CD4-positive, alpha-beta T cell (primary cell): ENCODE measurements at regions of chr15 and their contacts with region 1.

Region 1: GRCh38 chr15:100627789-100628395 is 25.5 kb downstream of the ASB7 start:
- DNase-seq: peak; percentile 43 to 85 (median 54)
- ATAC-seq: peak; percentile 92
- H3K4me3 ChIP-seq: no peak overlapping the region
- H3K4me3 Mint-ChIP-seq: no peak overlapping the region
- H3K27ac ChIP-seq: no peak overlapping the region
- H3K27ac Mint-ChIP-seq: no peak overlapping the region
- H3K4me1 ChIP-seq: peaks cover 8% of the 10 kb centered on the region
- H3K4me1 Mint-ChIP-seq: peaks cover 31% of the 10 kb centered on the region
- H3K27me3 ChIP-seq: no peaks in the 10 kb centered on the region
- H3K27me3 Mint-ChIP-seq: no peaks in the 10 kb centered on the region
- CTCF ChIP-seq: peak; percentile 96

Region 2: DNA sequence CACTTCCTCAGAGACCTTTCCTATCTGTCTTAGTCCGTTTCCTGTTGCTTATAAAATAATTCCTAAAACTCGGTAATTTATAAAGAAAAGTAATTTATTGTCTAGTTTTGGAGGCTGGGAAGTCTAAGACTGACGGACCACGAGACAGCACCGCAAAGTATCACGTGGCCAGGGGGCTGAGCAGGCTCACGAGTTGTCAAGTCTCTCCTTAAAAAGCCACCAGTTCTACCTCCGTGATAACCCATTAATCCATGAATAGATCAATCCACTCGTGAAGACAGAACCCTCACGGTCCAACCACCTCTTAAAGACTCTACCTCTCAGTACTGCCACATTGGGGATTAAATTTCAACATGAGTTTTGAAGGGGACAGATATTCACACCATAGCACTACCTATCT is 26.7 kb before region 1 on chr15:
- CTCF ChIA-PET with region 1: no interaction called
- POLR2A ChIA-PET with region 1: no interaction called
- intact Hi-C with region 1: no loop called
- DNase-seq: peak in 9 of 14 experiments; percentile 26 to 73 (median 34)
- ATAC-seq: no peak
- H3K4me3 ChIP-seq: peak overlapping the region; percentile 96
- H3K4me3 Mint-ChIP-seq: no peak overlapping the region
- H3K27ac ChIP-seq: peak overlapping the region; percentile 84 to 94
- H3K27ac Mint-ChIP-seq: no peak overlapping the region
- H3K4me1 ChIP-seq: peaks cover 48% of the 10 kb centered on the region
- H3K4me1 Mint-ChIP-seq: peaks cover 67% of the 10 kb centered on the region
- H3K27me3 ChIP-seq: no peaks in the 10 kb centered on the region
- H3K27me3 Mint-ChIP-seq: no peaks in the 10 kb centered on the region
- CTCF ChIP-seq: no peak

Region 3: DNA sequence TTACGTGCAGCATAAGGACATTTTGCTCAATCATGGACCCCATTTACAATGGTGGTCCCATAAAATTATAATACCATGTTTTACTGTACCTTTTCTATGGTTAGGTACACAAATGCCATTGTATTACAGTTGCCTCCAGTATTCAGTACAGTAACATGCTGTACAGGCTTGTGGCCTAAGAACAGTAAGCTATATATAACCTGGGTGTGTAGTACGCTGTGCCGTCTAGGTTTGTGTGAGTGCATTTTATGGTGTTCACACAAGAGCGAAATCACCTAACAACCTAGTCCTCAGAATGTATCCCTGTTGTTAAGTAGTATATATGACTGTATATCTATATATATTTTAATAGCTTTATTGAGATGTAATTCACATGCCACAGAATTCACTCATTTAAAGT is 13.0 kb before region 1 on chr15:
- CTCF ChIA-PET with region 1: no interaction called
- POLR2A ChIA-PET with region 1: no interaction called
- intact Hi-C with region 1: no loop called
- DNase-seq: no peak
- ATAC-seq: no peak
- H3K4me3 ChIP-seq: no peak overlapping the region
- H3K4me3 Mint-ChIP-seq: no peak overlapping the region
- H3K27ac ChIP-seq: no peak overlapping the region
- H3K27ac Mint-ChIP-seq: peak overlapping the region; percentile 13
- H3K4me1 ChIP-seq: no peaks in the 10 kb centered on the region
- H3K4me1 Mint-ChIP-seq: peaks cover 32% of the 10 kb centered on the region
- H3K27me3 ChIP-seq: no peaks in the 10 kb centered on the region
- H3K27me3 Mint-ChIP-seq: no peaks in the 10 kb centered on the region
- CTCF ChIP-seq: no peak

Region 4: DNA sequence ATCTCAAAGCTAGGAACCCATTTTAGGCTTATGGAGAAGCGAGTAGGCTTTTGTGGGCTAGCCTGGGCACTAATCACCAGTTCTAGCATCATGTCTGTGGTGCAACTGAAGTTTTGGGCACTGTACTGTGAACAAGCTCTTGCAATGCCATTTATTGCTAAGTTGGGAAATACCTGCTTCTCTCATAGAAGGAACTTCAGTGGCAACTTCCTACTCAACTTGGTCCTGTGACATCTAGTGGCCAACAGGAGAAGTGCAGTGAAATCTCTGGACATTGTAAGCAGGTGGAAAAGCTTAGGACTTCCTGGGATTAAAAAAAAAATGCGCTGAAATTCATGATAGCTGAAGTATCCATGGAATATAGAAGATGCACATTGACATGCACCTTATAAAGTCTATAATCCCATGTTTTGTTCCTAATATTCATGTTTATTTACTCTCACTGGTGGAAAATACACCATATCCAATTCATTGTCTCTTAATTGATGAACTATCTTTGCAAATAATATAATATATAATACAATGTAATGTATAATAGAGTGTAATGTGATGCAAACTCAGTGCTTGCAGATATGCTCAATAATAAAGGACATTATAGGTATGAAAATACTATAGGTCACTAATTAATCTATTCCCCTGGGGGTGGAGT is 245.3 kb after region 1 on chr15:
- CTCF ChIA-PET with region 1: no interaction called
- POLR2A ChIA-PET with region 1: no interaction called
- intact Hi-C with region 1: loop called (anchors 1 kb)
- DNase-seq: peak in 13 of 14 experiments; percentile 7 to 77 (median 35)
- ATAC-seq: peak; percentile 57
- H3K4me3 ChIP-seq: no peak overlapping the region
- H3K4me3 Mint-ChIP-seq: no peak overlapping the region
- H3K27ac ChIP-seq: no peak overlapping the region
- H3K27ac Mint-ChIP-seq: no peak overlapping the region
- H3K4me1 ChIP-seq: no peaks in the 10 kb centered on the region
- H3K4me1 Mint-ChIP-seq: no peaks in the 10 kb centered on the region
- H3K27me3 ChIP-seq: peaks cover 13 to 15% of the 10 kb centered on the region in 2 experiments
- H3K27me3 Mint-ChIP-seq: peaks cover 36% of the 10 kb centered on the region
- CTCF ChIP-seq: peak; percentile 94